ENCODE measurements at regions of chr11 and their contacts with region 1.

Region 1: DNA sequence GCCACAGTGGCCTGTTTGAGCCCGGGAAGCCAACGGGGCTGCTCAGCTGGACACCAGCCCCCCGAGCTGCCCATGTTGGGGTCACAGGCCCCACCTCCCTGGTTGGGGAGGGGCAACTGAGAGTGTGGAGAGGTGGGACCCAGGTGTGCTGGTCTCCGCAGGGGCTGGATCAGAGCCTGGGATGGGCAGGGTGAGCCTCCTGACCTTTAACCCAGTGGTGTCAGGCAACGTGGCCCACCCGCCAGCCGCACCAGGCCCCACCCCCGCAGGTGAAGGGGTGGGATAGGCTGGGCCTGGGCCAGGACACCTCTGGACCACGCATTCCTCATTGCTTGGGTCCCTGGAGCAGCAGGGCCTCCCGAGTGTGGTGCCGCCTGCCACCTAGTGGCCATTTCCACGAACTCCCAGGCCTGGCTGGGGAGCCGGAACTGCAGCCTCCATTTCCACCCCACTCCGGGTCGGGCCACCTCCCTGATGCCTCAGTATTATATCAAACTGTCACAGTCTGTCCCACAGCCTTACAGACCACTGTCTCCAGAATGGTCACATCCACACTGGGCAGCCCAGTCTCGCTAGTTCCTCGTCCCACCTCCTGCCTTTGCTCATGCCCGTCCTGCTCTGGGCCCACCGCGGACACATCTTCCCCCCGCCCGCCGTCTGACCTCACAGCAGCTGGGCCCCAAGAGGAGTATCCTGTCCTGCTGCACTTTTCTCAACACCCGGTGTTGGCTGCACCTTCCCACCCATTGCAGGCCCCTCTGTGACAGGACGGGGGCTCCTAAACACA is 13.3 kb upstream of the PPP6R3 start:
- DNase-seq: peak; percentile 54 to 77
- H3K4me3 ChIP-seq: no peak overlapping the region
- H3K27ac ChIP-seq: no peak overlapping the region
- H3K4me1 ChIP-seq: no peaks in the 10 kb centered on the region
- H3K27me3 ChIP-seq: no peaks in the 10 kb centered on the region
- CTCF ChIP-seq: peak; percentile 93

Region 2: GRCh38 chr11:68213555-68214174 is 233.5 kb before region 1 on chr11:
- CTCF ChIA-PET with region 1: no interaction called
- POLR2A ChIA-PET with region 1: no interaction called
- intact Hi-C with region 1: loop called (anchors 2 kb)
- DNase-seq: peak; percentile 72 to 83
- H3K4me3 ChIP-seq: peak overlapping the region; percentile 80
- H3K27ac ChIP-seq: peak overlapping the region; percentile 91
- H3K4me1 ChIP-seq: peaks cover 23% of the 10 kb centered on the region
- H3K27me3 ChIP-seq: no peaks in the 10 kb centered on the region
- CTCF ChIP-seq: peak; percentile 14; the same call in 1 of the 2 replicates

Region 3: DNA sequence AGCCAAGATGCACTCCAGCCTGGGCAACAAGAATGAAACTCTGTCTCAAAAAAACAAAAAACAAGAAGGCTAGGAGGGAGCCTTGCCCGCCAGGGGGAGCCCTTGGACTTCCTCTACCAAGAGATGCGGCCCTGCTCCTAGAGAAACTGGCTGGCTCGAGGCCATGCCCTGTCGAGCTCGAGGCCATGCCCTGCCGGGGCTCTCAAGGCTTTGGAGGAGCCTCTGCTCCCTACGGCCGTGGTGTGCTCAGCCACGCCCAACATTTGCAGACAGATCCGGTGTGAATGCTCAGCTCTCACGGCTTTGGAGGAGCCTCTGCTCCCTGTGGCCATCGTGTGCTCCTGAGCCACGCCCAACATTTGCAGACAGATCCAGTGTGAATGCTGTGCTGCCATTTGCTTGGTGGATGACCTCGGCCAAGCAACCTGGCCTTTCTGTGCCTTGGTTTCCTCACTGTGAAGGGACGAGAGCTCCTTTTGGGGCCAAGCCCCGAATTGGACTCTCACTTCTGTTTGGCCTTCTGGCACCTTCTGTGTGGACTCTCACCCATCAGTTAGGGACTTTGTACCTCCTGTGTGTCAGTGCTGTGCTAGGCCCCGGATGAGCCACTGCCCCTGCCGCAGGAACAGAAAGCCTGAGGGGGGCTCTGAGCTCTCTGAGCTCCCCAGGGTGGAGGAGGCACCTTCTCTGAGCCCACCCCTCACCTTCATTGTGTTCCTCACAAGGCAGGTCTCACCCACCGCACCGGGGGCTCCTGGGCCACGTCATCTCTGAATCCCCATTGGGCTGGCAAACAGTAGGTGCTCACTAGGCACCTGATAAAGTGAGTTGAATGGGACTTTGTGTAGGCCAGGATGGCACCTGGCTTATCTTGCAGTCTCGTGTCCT is 189.5 kb before region 1 on chr11:
- CTCF ChIA-PET with region 1: interaction called, 4 read pairs
- POLR2A ChIA-PET with region 1: no interaction called
- intact Hi-C with region 1: loop called (anchors 1 kb)
- DNase-seq: peak; percentile 86 to 96
- H3K4me3 ChIP-seq: no peak overlapping the region
- H3K27ac ChIP-seq: no peak overlapping the region
- H3K4me1 ChIP-seq: no peaks in the 10 kb centered on the region; the same call in 1 of the 2 replicates
- H3K27me3 ChIP-seq: no peaks in the 10 kb centered on the region
- CTCF ChIP-seq: peak; percentile 95